K562 (cell line): ENCODE measurements at regions of chr17 and their contacts with region 1.

Region 1: DNA sequence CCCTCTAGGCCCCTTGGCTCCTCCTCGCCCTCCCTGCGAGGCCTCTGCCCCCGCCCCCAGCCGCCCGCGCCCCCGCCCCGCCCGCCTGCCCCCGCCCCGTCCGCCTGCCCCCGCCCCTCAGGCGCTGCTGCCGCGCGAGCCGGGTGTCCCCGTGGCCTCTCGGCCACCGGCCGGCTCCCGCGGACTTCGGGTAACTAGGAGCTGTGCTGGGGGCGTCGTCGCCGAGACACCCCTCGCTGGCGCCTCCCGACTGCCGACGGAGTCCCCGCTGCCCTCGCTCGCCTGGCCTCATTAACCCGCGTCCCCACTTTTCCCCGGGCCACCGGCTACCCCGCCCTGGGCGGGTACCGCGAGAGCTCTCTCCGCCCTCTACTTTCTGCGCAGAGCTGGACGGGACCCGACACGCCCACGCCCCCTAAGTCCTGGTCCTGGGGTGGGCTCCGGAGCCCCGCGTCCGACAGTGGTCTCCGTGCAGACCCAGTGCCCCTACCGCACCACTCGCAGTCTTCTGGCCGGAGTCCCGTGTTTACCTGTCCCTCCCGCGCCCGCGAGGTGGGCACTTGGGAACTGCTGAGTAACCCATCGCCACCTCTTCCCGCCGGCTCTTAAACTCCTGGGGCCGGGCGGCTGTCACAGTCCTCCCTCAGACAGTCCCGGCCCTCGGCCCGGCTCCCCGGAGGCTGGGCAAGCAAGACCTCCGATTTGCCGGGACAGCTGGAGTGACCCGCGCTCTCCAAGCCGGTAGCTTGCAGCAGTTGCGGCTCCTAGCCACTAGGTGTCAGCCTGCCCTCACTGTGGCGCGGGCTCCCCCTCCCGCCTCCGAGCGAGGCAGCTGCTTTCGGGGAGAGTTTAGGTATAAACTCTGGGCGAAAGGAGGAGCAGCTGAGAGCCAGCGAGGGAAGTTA is at the start of gene TLCD1:
- DNase-seq: peak; percentile 75 to 99 (median 85)
- ATAC-seq: peak; percentile 58
- H3K4me3 ChIP-seq: peak within 1 kb of the TSS; percentile 83
- H3K27ac ChIP-seq: peak within 1 kb of the TSS; percentile 97
- H3K4me1 ChIP-seq: peaks cover 49 to 66% of the 10 kb centered on the region in 2 experiments
- H3K27me3 ChIP-seq: no peaks in the 10 kb centered on the region
- CTCF ChIP-seq: peak; percentile 99 to 100 (median 99)
- EP300 ChIP-seq: peak; percentile 38; the same call in 1 of the 2 replicates
- POLR2A ChIP-seq: no peak
- RAD21 ChIP-seq: peak; percentile 100
- polyA plus RNA-seq, gene TLCD1: 6.8 to 10.2 TPM

Region 2: DNA sequence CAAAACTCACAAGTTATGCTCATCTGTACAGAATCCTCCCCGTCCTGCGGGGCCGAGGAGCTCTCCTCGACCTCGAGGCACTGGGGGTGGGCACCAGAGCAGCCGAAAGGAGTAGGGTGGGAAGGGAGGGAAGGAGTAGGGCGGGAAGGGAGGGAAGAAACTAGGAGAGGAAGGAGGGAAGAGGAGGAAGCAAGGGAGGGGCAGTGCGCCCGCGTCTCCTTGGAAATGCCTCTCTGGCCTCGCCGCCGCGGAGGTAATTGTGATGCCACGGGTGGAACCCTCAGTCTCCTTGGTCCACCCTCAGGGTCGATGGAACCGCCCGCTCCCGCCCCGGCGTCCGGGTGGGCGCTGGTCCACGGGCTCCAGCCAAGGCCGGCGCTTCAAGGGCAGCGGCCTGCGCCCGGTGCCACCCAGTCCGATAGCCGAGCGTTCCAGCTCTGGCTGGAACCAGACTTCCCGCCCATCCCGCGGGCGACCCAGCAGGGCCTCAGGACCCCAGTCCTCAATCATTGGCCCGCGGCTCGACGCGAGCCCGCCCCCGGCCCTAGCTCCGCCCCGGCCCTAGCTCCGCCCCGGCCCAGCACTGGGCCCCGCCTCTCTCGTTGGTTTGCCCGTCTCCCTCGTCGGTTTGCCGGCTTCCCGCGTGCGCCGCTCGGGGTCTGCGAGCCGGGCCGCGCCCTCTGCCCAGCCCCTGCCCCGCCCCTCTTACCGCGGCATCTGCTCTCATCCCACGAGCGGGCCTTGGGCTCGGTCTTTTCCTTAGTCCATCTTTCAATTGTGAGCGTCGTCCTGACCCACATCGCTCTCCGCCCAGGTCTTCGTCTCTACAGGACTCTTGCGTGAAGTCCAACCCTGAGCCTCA is 15.4 kb before region 1 on chr17:
- CTCF ChIA-PET with region 1: no interaction called
- POLR2A ChIA-PET with region 1: interaction called, 133 read pairs
- in situ Hi-C with region 1: no loop called
- intact Hi-C with region 1: no loop called
- DNase-seq: peak; percentile 96 to 98 (median 98)
- ATAC-seq: peak; percentile 93
- H3K4me3 ChIP-seq: peak overlapping the region; percentile 71
- H3K27ac ChIP-seq: peak overlapping the region; percentile 88
- H3K4me1 ChIP-seq: peaks cover 16 to 34% of the 10 kb centered on the region in 2 experiments
- H3K27me3 ChIP-seq: 0 out of 5 replicates have a peak, but pooled peaks cover 0 to 11% of the 10 kb centered on the region in 2 experiments
- CTCF ChIP-seq: no peak
- EP300 ChIP-seq: no peak
- POLR2A ChIP-seq: peak; percentile 92
- RAD21 ChIP-seq: no peak

Region 3: DNA sequence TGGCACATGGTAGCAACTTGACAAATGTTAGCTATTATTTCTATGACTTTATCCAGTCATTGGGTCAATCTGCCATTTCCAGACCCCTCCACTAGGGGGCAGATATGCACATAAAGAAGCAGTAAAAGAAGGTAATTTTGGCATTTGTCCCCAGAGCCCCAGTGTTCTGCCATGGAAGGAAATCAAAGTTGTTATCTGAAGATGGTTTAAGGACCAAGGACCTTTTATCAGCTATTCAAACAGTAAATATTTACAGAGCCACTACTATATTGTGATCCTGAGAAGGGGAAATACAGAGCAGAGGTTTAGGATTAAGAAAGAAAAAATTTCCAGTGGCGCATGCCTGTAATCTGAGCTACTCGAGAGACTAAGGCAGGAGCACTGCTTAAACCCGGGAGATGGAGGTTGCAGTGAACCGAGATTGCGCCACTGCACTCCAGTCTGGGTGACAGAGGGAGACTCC is 37.4 kb after region 1 on chr17:
- CTCF ChIA-PET with region 1: no interaction called
- POLR2A ChIA-PET with region 1: interaction called, 11 read pairs
- in situ Hi-C with region 1: no loop called
- intact Hi-C with region 1: no loop called
- DNase-seq: peak; percentile 73 to 87 (median 78)
- ATAC-seq: peak; percentile 86
- H3K4me3 ChIP-seq: no peak overlapping the region
- H3K27ac ChIP-seq: no peak overlapping the region
- H3K4me1 ChIP-seq: peaks cover 3% of the 10 kb centered on the region in 2 experiments; a peak in 2 of 5 replicates
- H3K27me3 ChIP-seq: no peaks in the 10 kb centered on the region
- CTCF ChIP-seq: peak; percentile 83 to 95 (median 91)
- EP300 ChIP-seq: no peak
- POLR2A ChIP-seq: no peak
- RAD21 ChIP-seq: peak; percentile 84 to 92

Region 4: DNA sequence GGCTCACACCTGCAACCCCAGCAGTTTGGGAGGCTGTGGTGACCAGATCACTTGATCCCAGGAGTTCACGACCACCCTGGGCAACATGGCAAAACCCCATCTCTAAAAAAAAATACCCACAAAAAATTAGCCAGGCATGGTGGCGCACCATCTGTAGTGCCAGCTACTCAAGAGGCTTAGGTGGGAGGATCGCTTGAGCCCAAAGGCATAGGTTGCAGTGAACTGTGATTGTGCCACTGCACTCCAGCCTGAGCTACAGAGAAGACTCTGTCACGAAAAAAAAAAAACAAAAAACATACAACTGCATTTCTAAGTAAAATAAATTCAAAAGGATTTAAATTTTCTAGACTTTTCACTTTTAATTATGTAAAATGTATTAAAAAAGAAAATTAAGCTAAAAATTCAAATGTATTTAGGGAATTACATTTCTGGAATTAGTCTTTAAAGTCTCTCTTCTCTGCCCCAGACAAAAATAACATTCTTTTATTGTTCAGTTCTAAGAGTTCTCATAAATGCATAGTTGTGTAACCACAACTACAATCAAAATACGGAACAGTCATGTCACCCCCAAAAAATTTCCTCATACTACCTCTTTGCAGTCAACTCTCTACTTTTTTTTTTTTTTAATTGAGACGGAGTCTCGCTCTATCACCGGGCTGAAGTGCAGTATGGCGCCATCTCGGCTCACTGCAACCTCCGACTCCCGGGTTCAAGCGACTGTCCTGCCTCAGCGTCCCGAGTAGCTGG is 102.0 kb after region 1 on chr17:
- CTCF ChIA-PET with region 1: no interaction called
- POLR2A ChIA-PET with region 1: no interaction called
- in situ Hi-C with region 1: no loop called
- intact Hi-C with region 1: no loop called
- DNase-seq: no peak
- ATAC-seq: peak; percentile 30
- H3K4me3 ChIP-seq: no peak overlapping the region
- H3K27ac ChIP-seq: no peak overlapping the region
- H3K4me1 ChIP-seq: peaks cover 12 to 20% of the 10 kb centered on the region in 2 experiments; a peak in 4 of 5 replicates
- H3K27me3 ChIP-seq: no peaks in the 10 kb centered on the region
- CTCF ChIP-seq: no peak
- EP300 ChIP-seq: no peak
- POLR2A ChIP-seq: 0 out of 2 replicates have a peak, but pooled peaks have one; percentile 36
- RAD21 ChIP-seq: no peak

Region 5: GRCh38 chr17:28902819-28903545 is 176.5 kb after region 1 on chr17 and contains the start of gene DHRS13:
- CTCF ChIA-PET with region 1: interaction called, 14 read pairs
- POLR2A ChIA-PET with region 1: interaction called, 36 read pairs
- in situ Hi-C with region 1: no loop called
- intact Hi-C with region 1: loop called (anchors 2 kb)
- DNase-seq: peak; percentile 95 to 98 (median 96)
- ATAC-seq: peak; percentile 88
- H3K4me3 ChIP-seq: peak within 1 kb of the TSS; percentile 81
- H3K27ac ChIP-seq: peak within 1 kb of the TSS; percentile 85
- H3K4me1 ChIP-seq: peaks cover 69 to 72% of the 10 kb centered on the region in 2 experiments; a peak in 4 of 5 replicates
- H3K27me3 ChIP-seq: no peaks in the 10 kb centered on the region
- CTCF ChIP-seq: peak; percentile 99
- EP300 ChIP-seq: peak; percentile 72
- POLR2A ChIP-seq: peak; percentile 20; the same call in 1 of the 2 replicates
- RAD21 ChIP-seq: peak; percentile 80 to 87
- polyA plus RNA-seq, gene DHRS13: 0.32 TPM in 1 of 2 experiments, not detected in the other

Region 6: GRCh38 chr17:28951991-28952975 is 225.8 kb after region 1 on chr17:
- CTCF ChIA-PET with region 1: interaction called, 9 read pairs
- POLR2A ChIA-PET with region 1: interaction called, 9 read pairs
- in situ Hi-C with region 1: no loop called
- intact Hi-C with region 1: loop called (anchors 2 kb)
- DNase-seq: peak; percentile 89 to 99 (median 92)
- ATAC-seq: peak; percentile 83
- H3K4me3 ChIP-seq: peak overlapping the region; percentile 59
- H3K27ac ChIP-seq: peak overlapping the region; percentile 100
- H3K4me1 ChIP-seq: peaks cover 15 to 18% of the 10 kb centered on the region in 2 experiments
- H3K27me3 ChIP-seq: peaks cover 0 to 7% of the 10 kb centered on the region in 2 experiments; a peak in 2 of 5 replicates
- CTCF ChIP-seq: peak in 1 of 3 experiments; percentile 20; a peak in 1 of 6 replicates
- EP300 ChIP-seq: no peak; the same call in 1 of the 2 replicates
- POLR2A ChIP-seq: peak; percentile 86
- RAD21 ChIP-seq: no peak